ENCODE measurements at regions of chr10 and their contacts with region 1.

Region 1: GRCh38 chr10:68208424-68209042 is 23.4 kb downstream of the ATOH7 start:
- DNase-seq: peak; percentile 53
- ATAC-seq: peak; percentile 49
- H3K4me3 Mint-ChIP-seq: no peak overlapping the region
- H3K27ac Mint-ChIP-seq: no peak overlapping the region
- H3K4me1 Mint-ChIP-seq: no peaks in the 10 kb centered on the region
- H3K27me3 Mint-ChIP-seq: peaks cover 9% of the 10 kb centered on the region

Region 2: GRCh38 chr10:67861750-67862460 is 346.6 kb before region 1 on chr10:
- CTCF ChIA-PET with region 1: interaction called, 3 read pairs
- POLR2A ChIA-PET with region 1: no interaction called
- intact Hi-C with region 1: loop called in 1 of 2 experiments (anchors 5 kb)
- DNase-seq: no peak
- ATAC-seq: no peak
- H3K4me3 Mint-ChIP-seq: no peak overlapping the region
- H3K27ac Mint-ChIP-seq: no peak overlapping the region
- H3K4me1 Mint-ChIP-seq: no peaks in the 10 kb centered on the region
- H3K27me3 Mint-ChIP-seq: no peaks in the 10 kb centered on the region

Region 3: GRCh38 chr10:68010426-68010940 is 198.1 kb before region 1 on chr10:
- CTCF ChIA-PET with region 1: no interaction called
- POLR2A ChIA-PET with region 1: no interaction called
- intact Hi-C with region 1: no loop called
- DNase-seq: no peak
- ATAC-seq: no peak
- H3K4me3 Mint-ChIP-seq: no peak overlapping the region
- H3K27ac Mint-ChIP-seq: no peak overlapping the region
- H3K4me1 Mint-ChIP-seq: no peaks in the 10 kb centered on the region
- H3K27me3 Mint-ChIP-seq: no peaks in the 10 kb centered on the region

Region 4: DNA sequence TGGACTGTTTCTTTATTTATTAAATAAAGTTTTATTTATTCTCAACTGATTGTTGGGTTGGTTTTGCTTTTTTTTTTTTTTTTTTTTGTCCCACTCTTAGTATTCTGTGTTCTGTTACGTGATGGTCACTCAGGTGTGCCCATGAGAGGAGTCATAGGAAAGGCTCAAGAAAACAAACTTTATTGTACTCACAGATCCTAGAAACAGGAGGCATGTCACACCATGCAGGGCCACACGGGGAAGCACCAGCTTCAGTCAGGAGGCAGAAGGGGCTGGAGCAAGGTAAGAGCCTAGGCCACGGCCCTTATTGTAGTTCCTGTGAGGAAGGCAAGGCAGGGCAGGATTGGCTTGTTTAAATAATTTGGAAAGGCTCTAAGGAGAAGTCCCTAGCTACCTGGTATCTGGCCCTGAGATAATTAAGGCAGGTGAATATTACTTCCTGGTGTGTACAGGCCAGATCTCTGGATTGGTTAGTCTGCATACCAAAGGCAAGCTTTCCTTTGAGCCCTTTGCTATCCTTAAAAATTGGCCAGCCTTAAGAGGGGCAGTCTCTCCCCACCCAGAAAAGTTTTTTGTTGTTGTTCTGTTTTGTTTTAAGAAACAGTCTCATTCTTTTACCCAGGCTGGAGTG is 15.1 kb after region 1 on chr10:
- CTCF ChIA-PET with region 1: interaction called, 16 read pairs
- POLR2A ChIA-PET with region 1: no interaction called
- intact Hi-C with region 1: no loop called
- DNase-seq: peak; percentile 21
- ATAC-seq: no peak
- H3K4me3 Mint-ChIP-seq: no peak overlapping the region
- H3K27ac Mint-ChIP-seq: no peak overlapping the region
- H3K4me1 Mint-ChIP-seq: no peaks in the 10 kb centered on the region
- H3K27me3 Mint-ChIP-seq: peaks cover 7% of the 10 kb centered on the region

Region 5: DNA sequence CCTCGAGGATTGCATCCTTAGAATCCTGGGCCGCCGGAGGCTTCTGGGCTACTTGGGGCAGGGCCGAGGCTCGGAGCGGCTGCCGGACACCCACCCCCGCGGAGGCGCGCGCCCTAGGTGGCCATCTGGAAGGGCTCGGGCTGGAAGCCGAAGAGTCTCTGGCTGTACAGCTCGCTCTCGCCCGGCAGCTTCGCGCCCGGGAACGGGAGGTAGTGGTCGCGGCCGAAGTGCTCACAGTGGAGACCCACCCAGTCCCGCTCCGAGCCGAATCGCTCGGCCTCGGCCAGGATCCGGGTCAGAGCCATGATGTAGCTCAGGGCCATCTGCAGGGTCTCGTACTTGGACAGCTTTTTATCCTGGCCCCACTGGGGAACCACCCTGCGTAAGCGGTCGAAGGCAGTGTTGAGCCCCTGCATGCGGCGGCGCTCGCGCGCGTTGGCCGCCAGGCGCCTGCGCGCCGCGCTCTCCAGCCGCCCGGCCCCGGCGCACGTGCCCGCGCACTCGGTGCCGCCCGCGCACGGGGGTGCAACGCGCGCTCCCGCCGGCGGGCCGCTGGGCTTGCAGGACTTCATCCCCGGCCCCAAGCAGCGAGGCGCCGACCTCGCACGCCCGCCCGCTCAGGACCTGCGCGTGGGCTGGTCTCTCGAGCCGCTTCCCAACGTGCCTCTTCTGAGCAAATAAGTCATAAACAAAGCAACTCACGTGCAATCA is 22.7 kb after region 1 on chr10:
- CTCF ChIA-PET with region 1: interaction called, 16 read pairs
- POLR2A ChIA-PET with region 1: no interaction called
- intact Hi-C with region 1: no loop called
- DNase-seq: peak; percentile 63
- ATAC-seq: peak; percentile 90
- H3K4me3 Mint-ChIP-seq: peak overlapping the region; percentile 65
- H3K27ac Mint-ChIP-seq: no peak overlapping the region
- H3K4me1 Mint-ChIP-seq: peaks cover 7% of the 10 kb centered on the region
- H3K27me3 Mint-ChIP-seq: peaks cover 37% of the 10 kb centered on the region

Region 6: DNA sequence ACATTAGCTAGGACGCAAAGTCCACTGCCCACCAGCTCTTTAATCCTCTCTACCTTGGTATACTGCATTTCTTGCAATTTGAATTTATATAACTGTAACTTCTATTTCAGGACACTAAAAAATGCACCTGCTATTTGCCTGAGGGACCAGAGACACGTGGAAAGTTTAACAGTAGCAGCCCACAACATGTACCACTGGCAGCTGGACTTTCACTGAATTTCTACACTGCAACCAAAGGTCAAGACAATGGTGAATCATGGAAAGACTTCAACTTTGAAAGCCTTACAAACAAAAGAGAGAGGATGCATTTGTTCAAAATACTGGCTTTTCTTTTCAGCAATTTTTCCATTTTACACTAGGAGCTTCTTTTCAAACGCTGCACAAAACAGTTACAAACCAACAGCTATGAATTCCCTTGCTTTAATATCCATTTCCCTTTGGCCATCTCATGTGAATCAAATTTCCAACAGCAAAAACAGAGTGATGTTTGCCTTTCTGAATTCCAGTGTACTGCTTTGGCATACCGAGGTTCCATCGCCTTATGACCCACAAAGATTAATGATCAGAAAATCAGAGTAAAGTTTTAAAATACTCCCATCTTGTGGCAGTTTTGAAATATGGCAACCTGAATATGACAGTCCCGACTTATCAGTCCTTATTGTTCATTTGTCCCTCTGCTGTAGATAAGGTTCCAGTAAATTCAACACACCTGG is 93.4 kb after region 1 on chr10:
- CTCF ChIA-PET with region 1: interaction called, 33 read pairs
- POLR2A ChIA-PET with region 1: no interaction called
- intact Hi-C with region 1: loop called in 1 of 2 experiments (anchors 1 kb)
- DNase-seq: no peak
- ATAC-seq: peak; percentile 55
- H3K4me3 Mint-ChIP-seq: no peak overlapping the region
- H3K27ac Mint-ChIP-seq: no peak overlapping the region
- H3K4me1 Mint-ChIP-seq: no peaks in the 10 kb centered on the region
- H3K27me3 Mint-ChIP-seq: no peaks in the 10 kb centered on the region

Region 7: DNA sequence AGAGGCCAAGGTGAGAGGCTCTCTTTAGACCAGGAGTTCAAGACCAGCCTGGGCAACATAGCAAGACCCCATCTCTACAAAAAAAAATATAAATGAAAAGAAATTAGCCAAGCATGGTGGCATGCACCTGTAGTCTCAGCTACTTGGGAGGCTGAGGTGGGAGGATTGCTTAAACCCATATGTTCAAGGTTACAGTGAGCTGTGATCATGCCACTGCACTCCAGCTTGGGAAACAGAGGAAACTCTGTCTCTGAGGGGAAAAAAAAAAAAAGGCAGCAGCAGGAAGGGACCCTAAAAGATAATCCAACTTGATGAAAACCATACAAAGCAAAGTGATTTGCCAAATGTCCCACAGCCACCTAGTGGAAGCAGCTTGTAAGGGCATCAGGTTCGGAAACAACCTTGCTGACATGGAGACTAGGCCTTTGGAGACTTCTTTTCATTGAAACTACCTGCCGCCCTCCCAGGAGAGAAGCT is 139.8 kb after region 1 on chr10:
- CTCF ChIA-PET with region 1: interaction called, 16 read pairs
- POLR2A ChIA-PET with region 1: no interaction called
- intact Hi-C with region 1: loop called (anchors 1 kb)
- DNase-seq: peak; percentile 63
- ATAC-seq: peak; percentile 73
- H3K4me3 Mint-ChIP-seq: no peak overlapping the region
- H3K27ac Mint-ChIP-seq: peak overlapping the region; percentile 51
- H3K4me1 Mint-ChIP-seq: peaks cover 7% of the 10 kb centered on the region
- H3K27me3 Mint-ChIP-seq: no peaks in the 10 kb centered on the region

Region 8: DNA sequence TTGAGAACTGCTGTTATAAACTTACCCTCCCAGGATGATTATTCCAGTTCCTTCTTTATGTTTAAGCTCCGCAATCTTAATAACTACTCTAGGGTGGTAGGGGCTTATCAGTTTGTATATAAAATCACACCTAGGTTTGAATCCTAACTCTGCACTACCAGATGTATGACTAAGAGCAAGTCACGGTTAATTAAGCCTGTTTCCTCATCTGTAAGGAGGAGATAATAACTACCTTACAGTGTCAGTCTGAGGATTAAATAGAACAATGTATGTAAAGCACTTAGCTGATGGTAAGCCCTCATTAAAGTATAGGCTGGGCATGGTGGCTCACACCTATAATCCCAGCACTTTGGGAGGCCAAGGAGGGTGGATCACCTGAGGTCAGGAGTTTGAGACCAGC is 254.0 kb after region 1 on chr10:
- CTCF ChIA-PET with region 1: no interaction called
- POLR2A ChIA-PET with region 1: no interaction called
- intact Hi-C with region 1: no loop called
- DNase-seq: no peak
- ATAC-seq: no peak
- H3K4me3 Mint-ChIP-seq: no peak overlapping the region
- H3K27ac Mint-ChIP-seq: no peak overlapping the region
- H3K4me1 Mint-ChIP-seq: no peaks in the 10 kb centered on the region
- H3K27me3 Mint-ChIP-seq: no peaks in the 10 kb centered on the region

Region 9: GRCh38 chr10:69202332-69202731 is 993.8 kb after region 1 on chr10:
- CTCF ChIA-PET with region 1: no interaction called
- POLR2A ChIA-PET with region 1: no interaction called
- intact Hi-C with region 1: no loop called
- DNase-seq: no peak
- ATAC-seq: peak; percentile 38
- H3K4me3 Mint-ChIP-seq: no peak overlapping the region
- H3K27ac Mint-ChIP-seq: no peak overlapping the region
- H3K4me1 Mint-ChIP-seq: peaks cover 5% of the 10 kb centered on the region
- H3K27me3 Mint-ChIP-seq: no peaks in the 10 kb centered on the region

Measured in activated CD4-positive, alpha-beta T cell treated with anti-CD3 and anti-CD28 coated beads for 36 hours (primary cell).